ENCODE measurements at regions of chr18 and their contacts with region 1.

Region 1: DNA sequence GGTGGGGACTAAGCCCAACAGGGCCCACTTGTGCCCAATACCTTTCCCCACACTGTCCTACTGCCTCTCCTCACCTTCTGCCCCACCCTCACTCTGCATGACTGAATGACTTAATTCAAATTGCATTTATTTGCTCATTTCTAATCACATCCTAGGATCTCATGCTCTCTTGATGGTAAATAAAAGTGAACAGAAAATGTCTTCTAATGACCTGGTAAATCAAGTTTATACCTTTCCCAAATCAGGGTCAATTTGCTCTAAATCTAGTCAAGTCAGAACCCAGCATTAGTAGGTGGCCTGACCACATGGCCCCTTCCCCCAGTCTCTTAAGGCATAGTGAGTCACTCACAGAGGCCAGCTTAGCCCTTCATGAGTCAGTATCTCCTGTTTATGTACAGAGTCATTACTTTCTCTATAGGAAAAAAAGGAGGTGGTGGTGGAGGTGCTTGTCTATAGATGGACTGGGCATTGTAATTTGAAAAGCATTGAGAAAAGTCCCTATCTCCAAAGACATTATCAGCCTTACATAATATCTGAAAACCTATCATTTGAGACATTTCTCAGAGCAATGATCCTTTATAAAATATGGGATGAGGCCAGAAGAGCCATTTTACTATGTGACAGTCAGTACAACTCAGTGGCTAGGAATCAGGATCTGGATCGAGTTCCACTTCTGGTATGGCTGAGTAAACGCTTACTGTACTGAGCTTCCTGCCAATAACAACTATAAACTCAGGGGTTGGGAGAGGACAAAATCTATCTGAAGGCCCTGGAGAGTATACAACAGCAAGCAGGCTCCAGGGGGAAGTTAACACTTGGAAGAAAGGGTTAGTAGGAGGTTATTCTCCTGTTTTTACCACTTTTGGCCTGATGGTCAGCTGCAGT is 22.6 kb upstream of the SIGLEC15 start:
- DNase-seq: no peak
- H3K4me3 ChIP-seq: no peak overlapping the region
- H3K27ac ChIP-seq: no peak overlapping the region
- H3K4me1 ChIP-seq: peaks cover 0 to 8% (median 4%) of the 10 kb centered on the region in 4 experiments; a peak in 6 of 7 replicates
- H3K27me3 ChIP-seq: no peaks in the 10 kb centered on the region
- CTCF ChIP-seq: no peak
- EP300 ChIP-seq: no peak
- POLR2A ChIP-seq: no peak
- RAD21 ChIP-seq: no peak

Region 2: GRCh38 chr18:45730832-45731575 is 71.8 kb before region 1 on chr18:
- CTCF ChIA-PET with region 1: interaction called, 44 read pairs
- POLR2A ChIA-PET with region 1: no interaction called
- DNase-seq: no peak
- H3K4me3 ChIP-seq: no peak overlapping the region
- H3K27ac ChIP-seq: no peak overlapping the region
- H3K4me1 ChIP-seq: no peaks in the 10 kb centered on the region
- H3K27me3 ChIP-seq: no peaks in the 10 kb centered on the region
- CTCF ChIP-seq: no peak
- EP300 ChIP-seq: no peak
- POLR2A ChIP-seq: no peak
- RAD21 ChIP-seq: no peak

Region 3: GRCh38 chr18:45786649-45787340 is 16.1 kb before region 1 on chr18:
- CTCF ChIA-PET with region 1: interaction called, 26 read pairs
- POLR2A ChIA-PET with region 1: interaction called, 3 read pairs
- DNase-seq: no peak
- H3K4me3 ChIP-seq: no peak overlapping the region
- H3K27ac ChIP-seq: no peak overlapping the region
- H3K4me1 ChIP-seq: peaks cover 0 to 11% (median 6%) of the 10 kb centered on the region in 4 experiments; a peak in 4 of 7 replicates
- H3K27me3 ChIP-seq: no peaks in the 10 kb centered on the region
- CTCF ChIP-seq: peak in 2 of 3 experiments; percentile 21 to 36; a peak in 2 of 4 replicates
- EP300 ChIP-seq: no peak
- POLR2A ChIP-seq: no peak
- RAD21 ChIP-seq: no peak

Region 4: GRCh38 chr18:45817543-45817942 is 14.7 kb after region 1 on chr18:
- CTCF ChIA-PET with region 1: interaction called, 21 read pairs
- POLR2A ChIA-PET with region 1: no interaction called
- DNase-seq: no peak
- H3K4me3 ChIP-seq: no peak overlapping the region
- H3K27ac ChIP-seq: no peak overlapping the region
- H3K4me1 ChIP-seq: peaks cover 0 to 3% (median 0%) of the 10 kb centered on the region in 4 experiments; a peak in 1 of 7 replicates
- H3K27me3 ChIP-seq: no peaks in the 10 kb centered on the region
- CTCF ChIP-seq: no peak
- EP300 ChIP-seq: no peak
- POLR2A ChIP-seq: no peak
- RAD21 ChIP-seq: no peak

Region 5: DNA sequence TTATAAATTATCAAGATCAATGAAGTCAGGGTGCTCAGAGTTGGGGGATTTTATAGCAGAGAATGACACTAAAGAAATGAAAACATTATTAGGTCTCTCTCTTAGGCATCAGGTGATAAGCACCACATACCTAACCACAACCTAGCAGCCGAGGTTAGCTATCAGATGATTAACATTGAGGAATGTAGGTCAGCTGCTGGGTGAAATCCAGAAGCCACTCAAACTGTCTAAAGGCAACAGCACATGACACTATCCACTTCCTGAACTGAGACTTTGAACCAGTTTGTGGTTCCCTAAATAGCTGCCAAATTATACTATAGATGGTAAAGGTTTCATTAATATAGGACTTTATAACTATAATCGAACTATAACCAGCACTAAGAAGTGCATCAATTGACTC is 159.6 kb after region 1 on chr18:
- CTCF ChIA-PET with region 1: no interaction called
- POLR2A ChIA-PET with region 1: no interaction called
- DNase-seq: no peak
- H3K4me3 ChIP-seq: no peak overlapping the region
- H3K27ac ChIP-seq: no peak overlapping the region
- H3K4me1 ChIP-seq: no peaks in the 10 kb centered on the region
- H3K27me3 ChIP-seq: no peaks in the 10 kb centered on the region
- CTCF ChIP-seq: no peak
- EP300 ChIP-seq: no peak
- POLR2A ChIP-seq: no peak
- RAD21 ChIP-seq: no peak